ENCODE measurements at regions of chr3 and their contacts with region 1.

Region 1: DNA sequence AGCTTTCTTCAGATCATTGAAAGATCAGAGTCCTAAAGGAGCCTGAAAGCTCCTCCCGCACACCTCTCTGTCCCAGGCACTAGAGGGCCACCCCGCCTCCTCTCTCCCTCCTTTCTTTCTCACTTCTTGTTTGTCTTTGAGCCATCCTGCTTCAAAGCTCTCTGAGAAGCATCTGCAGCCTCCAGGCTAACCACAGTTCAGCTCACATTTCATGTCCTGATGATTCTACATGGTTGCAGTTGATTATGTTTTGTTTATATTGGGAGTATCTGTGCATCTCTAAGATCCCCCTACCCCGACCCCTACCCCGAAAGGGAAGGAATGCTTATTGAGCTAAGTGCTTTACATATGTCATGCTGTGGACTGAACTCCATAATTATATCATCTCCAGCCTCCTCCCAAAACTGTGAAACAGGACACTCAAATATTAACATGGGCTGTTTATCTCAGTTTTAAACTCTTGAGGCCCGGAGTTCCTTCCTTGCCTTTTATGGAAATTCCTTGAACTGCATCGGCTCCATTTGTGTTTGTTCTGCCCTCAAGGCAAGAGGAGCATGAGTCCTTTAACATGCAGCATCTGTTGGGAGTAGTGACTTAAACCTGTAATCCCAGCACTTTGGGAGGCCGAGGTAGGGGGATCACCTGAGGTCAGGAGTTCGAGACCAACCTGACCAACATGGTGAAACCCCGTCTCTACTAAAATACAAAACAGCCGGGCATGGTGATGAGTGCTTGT is 30.9 kb downstream of the MGLL start:
- DNase-seq: peak; percentile 37
- H3K4me3 Mint-ChIP-seq: no peak overlapping the region
- H3K27ac Mint-ChIP-seq: no peak overlapping the region
- H3K4me1 Mint-ChIP-seq: no peaks in the 10 kb centered on the region
- H3K27me3 Mint-ChIP-seq: peaks cover 48% of the 10 kb centered on the region

Region 2: GRCh38 chr3:127822698-127823425 is 31.5 kb after region 1 on chr3:
- CTCF ChIA-PET with region 1: interaction called, 13 read pairs
- DNase-seq: no peak
- H3K4me3 Mint-ChIP-seq: peak overlapping the region; percentile 73
- H3K27ac Mint-ChIP-seq: no peak overlapping the region
- H3K4me1 Mint-ChIP-seq: peaks cover 9% of the 10 kb centered on the region
- H3K27me3 Mint-ChIP-seq: peaks cover 73% of the 10 kb centered on the region

Region 3: GRCh38 chr3:127970966-127971592 is 179.7 kb after region 1 on chr3:
- CTCF ChIA-PET with region 1: interaction called, 11 read pairs
- DNase-seq: peak; percentile 32
- H3K4me3 Mint-ChIP-seq: no peak overlapping the region
- H3K27ac Mint-ChIP-seq: no peak overlapping the region
- H3K4me1 Mint-ChIP-seq: no peaks in the 10 kb centered on the region
- H3K27me3 Mint-ChIP-seq: peaks cover 42% of the 10 kb centered on the region